ENCODE measurements at regions of chr20 and their contacts with region 1.

Region 1: DNA sequence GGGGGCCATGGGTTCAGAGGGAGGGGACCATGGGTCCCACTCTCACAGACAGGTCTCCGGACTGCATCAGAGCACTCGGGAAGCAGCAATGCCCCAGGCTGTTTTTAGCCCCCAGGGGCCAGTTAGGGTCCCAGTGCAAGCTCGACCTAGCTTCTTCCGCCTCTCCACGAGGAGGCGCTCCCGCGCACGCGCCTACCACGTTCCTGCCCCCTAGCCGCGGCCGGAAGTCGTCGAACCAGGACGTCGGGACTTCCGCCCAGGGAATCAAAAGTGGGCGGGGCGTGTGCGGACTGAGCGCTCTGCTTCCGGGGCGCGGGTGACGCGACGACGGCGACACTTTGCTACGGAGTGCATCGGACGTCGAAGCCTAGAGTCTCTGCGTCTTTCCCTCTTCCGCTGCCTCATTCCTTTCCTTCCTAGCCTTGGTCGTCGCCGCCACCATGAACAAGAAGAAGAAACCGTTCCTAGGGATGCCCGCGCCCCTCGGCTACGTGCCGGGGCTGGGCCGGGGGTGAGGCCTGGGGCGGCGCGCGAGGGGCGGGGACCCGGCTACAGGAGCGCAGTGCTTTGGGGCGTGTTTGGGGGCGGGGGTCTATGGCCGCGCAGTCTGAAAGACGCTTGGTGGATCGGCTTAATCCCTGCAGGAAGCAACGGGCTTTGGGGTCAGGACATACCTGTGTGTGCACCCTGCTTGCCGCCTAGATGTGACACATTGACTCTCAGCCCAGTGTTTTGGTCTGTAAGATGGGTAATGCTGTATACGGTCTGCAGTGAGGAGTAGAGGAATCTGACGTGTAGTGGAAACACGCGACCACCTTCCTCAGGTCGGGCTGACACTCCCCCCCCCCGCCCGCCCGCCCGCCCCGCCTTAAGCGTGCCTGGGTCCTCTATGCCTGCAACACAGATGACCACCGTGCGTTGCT is at the start of gene PRPF6:
- DNase-seq: peak; percentile 91 to 94 (median 94)
- H3K4me3 ChIP-seq: peak within 1 kb of the TSS; percentile 42 to 67
- H3K4me3 Mint-ChIP-seq: peak within 1 kb of the TSS; percentile 90 to 99 (median 93)
- H3K27ac ChIP-seq: peak within 1 kb of the TSS; percentile 69
- H3K27ac Mint-ChIP-seq: peak within 1 kb of the TSS; percentile 95 to 99 (median 98)
- H3K4me1 ChIP-seq: peaks cover 54% of the 10 kb centered on the region
- H3K4me1 Mint-ChIP-seq: peaks cover 48 to 72% (median 60%) of the 10 kb centered on the region in 4 donors
- H3K27me3 ChIP-seq: no peaks in the 10 kb centered on the region
- H3K27me3 Mint-ChIP-seq: no peaks in the 10 kb centered on the region
- total RNA-seq, gene PRPF6: 86.4 to 88.7 TPM

Region 2: GRCh38 chr20:64010711-64011237 is 29.7 kb after region 1 on chr20:
- CTCF ChIA-PET with region 1: interaction called, 9 read pairs
- POLR2A ChIA-PET with region 1: interaction called, 10 read pairs
- intact Hi-C with region 1: no loop called
- DNase-seq: no peak
- H3K4me3 ChIP-seq: peak overlapping the region; percentile 38 to 60
- H3K4me3 Mint-ChIP-seq: peak overlapping the region in 2 of 8 donors; percentile 31 to 44
- H3K27ac ChIP-seq: no peak overlapping the region
- H3K27ac Mint-ChIP-seq: peak overlapping the region in 4 of 7 donors; percentile 4 to 55 (median 42)
- H3K4me1 ChIP-seq: peaks cover 39% of the 10 kb centered on the region
- H3K4me1 Mint-ChIP-seq: peaks cover 6 to 40% (median 24%) of the 10 kb centered on the region in 4 donors
- H3K27me3 ChIP-seq: no peaks in the 10 kb centered on the region
- H3K27me3 Mint-ChIP-seq: no peaks in the 10 kb centered on the region

Region 3: DNA sequence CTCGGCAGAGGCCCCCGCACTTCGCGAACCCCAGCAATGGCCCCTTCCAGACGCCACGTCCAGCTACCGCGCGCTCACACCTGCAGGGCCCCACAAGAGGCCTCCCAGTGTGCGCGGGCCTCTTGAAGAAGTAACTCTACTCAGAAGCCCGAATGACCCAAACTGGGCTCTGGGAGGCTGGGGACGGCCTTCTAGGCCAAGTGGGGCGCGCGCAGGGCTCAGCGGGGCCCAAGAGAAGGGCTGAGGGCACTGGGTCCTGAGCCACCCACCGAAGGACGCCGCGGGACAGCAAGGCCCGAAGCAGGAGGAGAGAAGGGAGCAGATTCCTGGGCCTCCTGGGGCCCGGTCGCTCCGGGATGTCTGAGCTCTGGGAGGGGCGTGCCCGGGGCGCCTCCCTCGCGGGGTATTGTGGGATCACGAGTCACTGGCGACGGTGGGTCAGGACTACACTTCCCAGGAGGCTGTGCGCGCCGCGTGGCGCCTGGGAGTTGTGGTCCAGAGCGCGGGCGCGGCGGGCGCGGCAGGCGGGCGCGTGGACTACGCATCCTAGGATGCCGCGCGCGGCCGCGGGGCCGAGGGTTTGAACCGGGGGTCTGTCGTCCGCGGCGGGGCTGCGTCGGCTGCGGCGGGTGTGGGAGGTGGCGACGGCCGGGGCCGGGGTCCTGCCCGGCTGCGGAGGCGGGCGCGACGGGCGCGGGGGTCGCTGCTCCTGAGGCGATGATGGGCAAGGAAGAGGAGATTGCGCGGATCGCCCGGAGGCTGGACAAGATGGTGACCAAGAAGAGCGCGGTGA is 81.7 kb after region 1 on chr20 and contains the start of gene TCEA2:
- CTCF ChIA-PET with region 1: interaction called, 47 read pairs
- POLR2A ChIA-PET with region 1: interaction called, 7 read pairs
- intact Hi-C with region 1: loop called (anchors 1 kb)
- DNase-seq: peak; percentile 90 to 91 (median 90)
- H3K4me3 ChIP-seq: peak within 1 kb of the TSS; percentile 42 to 57
- H3K4me3 Mint-ChIP-seq: peak within 1 kb of the TSS; percentile 80 to 93 (median 88)
- H3K27ac ChIP-seq: peak within 1 kb of the TSS; percentile 59
- H3K27ac Mint-ChIP-seq: peak within 1 kb of the TSS; percentile 50 to 92 (median 86)
- H3K4me1 ChIP-seq: peaks cover 57% of the 10 kb centered on the region
- H3K4me1 Mint-ChIP-seq: peaks cover 21 to 47% (median 35%) of the 10 kb centered on the region in 4 donors
- H3K27me3 ChIP-seq: no peaks in the 10 kb centered on the region
- H3K27me3 Mint-ChIP-seq: no peaks in the 10 kb centered on the region
- total RNA-seq, gene TCEA2: 43.3 to 45.9 TPM